CD8-positive, alpha-beta T cell (primary cell): ENCODE measurements at regions of chr16 and their contacts with region 1.

Region 1: GRCh38 chr16:56262148-56262547 is 70.9 kb downstream of the GNAO1 start:
- DNase-seq: peak; percentile 17 to 87 (median 58)
- ATAC-seq: peak; percentile 93
- H3K4me3 ChIP-seq: peak overlapping the region in 1 of 2 experiments; percentile 21
- H3K4me3 Mint-ChIP-seq: peak overlapping the region; percentile 13
- H3K27ac ChIP-seq: peak overlapping the region in 1 of 2 experiments; percentile 69
- H3K27ac Mint-ChIP-seq: peak overlapping the region; percentile 65
- H3K4me1 ChIP-seq: peaks cover 28% of the 10 kb centered on the region
- H3K4me1 Mint-ChIP-seq: peaks cover 29% of the 10 kb centered on the region
- H3K27me3 ChIP-seq: no peaks in the 10 kb centered on the region
- H3K27me3 Mint-ChIP-seq: no peaks in the 10 kb centered on the region
- CTCF ChIP-seq: no peak

Region 2: GRCh38 chr16:56191156-56191815 is 70.9 kb before region 1 on chr16 and contains the start of gene GNAO1:
- CTCF ChIA-PET with region 1: no interaction called
- POLR2A ChIA-PET with region 1: interaction called, 3 read pairs
- intact Hi-C with region 1: loop called (anchors 2 to 5 kb)
- DNase-seq: peak; percentile 41 to 92 (median 60)
- ATAC-seq: peak; percentile 76
- H3K4me3 ChIP-seq: peak within 1 kb of the TSS; percentile 43 to 65
- H3K4me3 Mint-ChIP-seq: peak within 1 kb of the TSS; percentile 82
- H3K27ac ChIP-seq: peak within 1 kb of the TSS in 1 of 2 experiments; percentile 56
- H3K27ac Mint-ChIP-seq: peak within 1 kb of the TSS; percentile 49
- H3K4me1 ChIP-seq: peaks cover 38% of the 10 kb centered on the region
- H3K4me1 Mint-ChIP-seq: peaks cover 27% of the 10 kb centered on the region
- H3K27me3 ChIP-seq: peaks cover 20 to 21% of the 10 kb centered on the region in 2 experiments
- H3K27me3 Mint-ChIP-seq: peaks cover 40% of the 10 kb centered on the region
- CTCF ChIP-seq: no peak
- total RNA-seq, gene GNAO1: 2.3 to 3.6 TPM

Region 3: GRCh38 chr16:56279132-56279531 is 17.0 kb after region 1 on chr16:
- CTCF ChIA-PET with region 1: no interaction called
- POLR2A ChIA-PET with region 1: interaction called, 3 read pairs
- intact Hi-C with region 1: loop called in 1 of 2 experiments (anchors 1 kb)
- DNase-seq: peak; percentile 10 to 79 (median 47)
- ATAC-seq: peak; percentile 87
- H3K4me3 ChIP-seq: peak overlapping the region in 1 of 2 experiments; percentile 40
- H3K4me3 Mint-ChIP-seq: peak overlapping the region; percentile 72
- H3K27ac ChIP-seq: peak overlapping the region in 1 of 2 experiments; percentile 29
- H3K27ac Mint-ChIP-seq: peak overlapping the region; percentile 79
- H3K4me1 ChIP-seq: peaks cover 5% of the 10 kb centered on the region
- H3K4me1 Mint-ChIP-seq: peaks cover 21% of the 10 kb centered on the region
- H3K27me3 ChIP-seq: no peaks in the 10 kb centered on the region
- H3K27me3 Mint-ChIP-seq: no peaks in the 10 kb centered on the region
- CTCF ChIP-seq: no peak

Region 4: DNA sequence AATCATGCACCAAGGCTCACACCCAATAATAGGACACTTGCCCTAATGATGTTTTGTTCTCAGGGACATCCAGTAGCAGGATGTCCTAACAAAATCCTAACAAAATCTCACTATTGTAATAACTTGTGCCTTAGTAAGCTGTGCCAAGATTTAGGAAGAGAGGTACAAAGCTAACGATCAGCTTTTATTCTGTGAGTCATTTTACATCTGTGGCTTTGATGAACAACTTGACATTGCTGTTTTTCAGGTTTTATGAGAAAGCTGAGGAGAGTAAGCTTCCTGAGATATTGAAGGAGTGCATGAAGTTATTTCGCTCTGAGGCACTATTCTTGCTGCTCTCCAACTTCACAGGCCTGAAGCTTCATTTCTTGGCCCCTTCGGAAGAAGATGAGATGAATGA is 208.1 kb after region 1 on chr16:
- CTCF ChIA-PET with region 1: no interaction called
- POLR2A ChIA-PET with region 1: no interaction called
- intact Hi-C with region 1: no loop called
- DNase-seq: no peak
- ATAC-seq: no peak
- H3K4me3 ChIP-seq: no peak overlapping the region
- H3K4me3 Mint-ChIP-seq: no peak overlapping the region
- H3K27ac ChIP-seq: no peak overlapping the region
- H3K27ac Mint-ChIP-seq: no peak overlapping the region
- H3K4me1 ChIP-seq: no peaks in the 10 kb centered on the region
- H3K4me1 Mint-ChIP-seq: no peaks in the 10 kb centered on the region
- H3K27me3 ChIP-seq: no peaks in the 10 kb centered on the region
- H3K27me3 Mint-ChIP-seq: no peaks in the 10 kb centered on the region
- CTCF ChIP-seq: no peak